ENCODE measurements at regions of chr14 and their contacts with region 1.

Region 1: GRCh38 chr14:22986508-22987054 is 4.2 kb upstream of the AJUBA start:
- DNase-seq: peak; percentile 85 to 93
- H3K4me3 ChIP-seq: no peak overlapping the region
- H3K27ac ChIP-seq: no peak overlapping the region
- H3K4me1 ChIP-seq: no peaks in the 10 kb centered on the region
- H3K27me3 ChIP-seq: no peaks in the 10 kb centered on the region
- CTCF ChIP-seq: peak; percentile 88 to 95 (median 92)
- POLR2A ChIP-seq: no peak

Region 2: GRCh38 chr14:22598099-22598899 is 388.3 kb before region 1 on chr14 and contains the start of gene ABHD4:
- intact Hi-C with region 1: no loop called
- DNase-seq: peak; percentile 80
- H3K4me3 ChIP-seq: peak within 1 kb of the TSS; percentile 64 to 70
- H3K27ac ChIP-seq: peak within 1 kb of the TSS; percentile 88 to 92
- H3K4me1 ChIP-seq: peaks cover 0 to 9% of the 10 kb centered on the region in 2 donors
- H3K27me3 ChIP-seq: no peaks in the 10 kb centered on the region
- CTCF ChIP-seq: peak in 1 of 4 experiments; percentile 2
- POLR2A ChIP-seq: peak; percentile 84 to 97
- total RNA-seq, gene ABHD4: 17.9 to 40.0 (median 28.6) TPM

Region 3: GRCh38 chr14:23057757-23058653 is 71.4 kb after region 1 on chr14:
- intact Hi-C with region 1: loop called (anchors 5 kb)
- DNase-seq: peak; percentile 89
- H3K4me3 ChIP-seq: peak overlapping the region; percentile 58 to 65
- H3K27ac ChIP-seq: peak overlapping the region; percentile 86 to 92
- H3K4me1 ChIP-seq: no peaks in the 10 kb centered on the region
- H3K27me3 ChIP-seq: no peaks in the 10 kb centered on the region
- CTCF ChIP-seq: peak; percentile 92 to 97 (median 94)
- POLR2A ChIP-seq: no peak